ENCODE measurements at regions of chr2 and their contacts with region 1.

Region 1: DNA sequence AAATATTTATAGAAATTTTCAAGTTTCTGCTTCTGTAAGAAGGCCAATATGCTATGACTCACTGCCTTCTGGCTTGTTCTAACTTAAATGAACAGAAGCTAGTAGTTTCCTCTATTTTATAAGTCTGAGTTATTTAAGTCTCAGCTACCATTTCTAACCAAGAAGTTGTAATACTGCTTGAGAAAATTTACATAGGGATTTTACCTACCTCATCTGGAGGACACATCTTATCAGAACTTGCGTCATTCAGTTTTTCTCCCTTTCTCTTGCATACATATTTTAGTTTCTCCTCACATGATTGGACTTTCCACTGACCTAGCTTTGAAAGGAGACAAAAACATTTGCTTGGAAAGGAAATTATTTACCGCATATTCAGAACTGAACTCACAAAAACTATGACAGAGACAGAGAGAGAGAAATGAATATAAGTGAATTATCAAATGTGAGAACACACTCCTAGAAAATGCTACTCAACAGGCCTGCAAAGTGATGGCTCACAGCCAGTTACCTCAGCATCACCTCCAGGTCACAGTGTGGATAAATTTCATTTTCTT is 81.1 kb upstream of the CD302 start:
- DNase-seq: peak; percentile 74
- ATAC-seq: peak; percentile 87
- H3K4me3 Mint-ChIP-seq: no peak overlapping the region
- H3K27ac Mint-ChIP-seq: peak overlapping the region; percentile 76
- H3K4me1 Mint-ChIP-seq: peaks cover 62% of the 10 kb centered on the region
- H3K27me3 Mint-ChIP-seq: no peaks in the 10 kb centered on the region

Region 2: GRCh38 chr2:159516241-159516766 is 362.8 kb before region 1 on chr2:
- CTCF ChIA-PET with region 1: no interaction called
- POLR2A ChIA-PET with region 1: no interaction called
- intact Hi-C with region 1: loop called in 1 of 2 experiments (anchors 5 kb)
- DNase-seq: peak; percentile 10
- ATAC-seq: peak; percentile 91
- H3K4me3 Mint-ChIP-seq: peak overlapping the region; percentile 73
- H3K27ac Mint-ChIP-seq: peak overlapping the region; percentile 83
- H3K4me1 Mint-ChIP-seq: peaks cover 19% of the 10 kb centered on the region
- H3K27me3 Mint-ChIP-seq: no peaks in the 10 kb centered on the region

Region 3: DNA sequence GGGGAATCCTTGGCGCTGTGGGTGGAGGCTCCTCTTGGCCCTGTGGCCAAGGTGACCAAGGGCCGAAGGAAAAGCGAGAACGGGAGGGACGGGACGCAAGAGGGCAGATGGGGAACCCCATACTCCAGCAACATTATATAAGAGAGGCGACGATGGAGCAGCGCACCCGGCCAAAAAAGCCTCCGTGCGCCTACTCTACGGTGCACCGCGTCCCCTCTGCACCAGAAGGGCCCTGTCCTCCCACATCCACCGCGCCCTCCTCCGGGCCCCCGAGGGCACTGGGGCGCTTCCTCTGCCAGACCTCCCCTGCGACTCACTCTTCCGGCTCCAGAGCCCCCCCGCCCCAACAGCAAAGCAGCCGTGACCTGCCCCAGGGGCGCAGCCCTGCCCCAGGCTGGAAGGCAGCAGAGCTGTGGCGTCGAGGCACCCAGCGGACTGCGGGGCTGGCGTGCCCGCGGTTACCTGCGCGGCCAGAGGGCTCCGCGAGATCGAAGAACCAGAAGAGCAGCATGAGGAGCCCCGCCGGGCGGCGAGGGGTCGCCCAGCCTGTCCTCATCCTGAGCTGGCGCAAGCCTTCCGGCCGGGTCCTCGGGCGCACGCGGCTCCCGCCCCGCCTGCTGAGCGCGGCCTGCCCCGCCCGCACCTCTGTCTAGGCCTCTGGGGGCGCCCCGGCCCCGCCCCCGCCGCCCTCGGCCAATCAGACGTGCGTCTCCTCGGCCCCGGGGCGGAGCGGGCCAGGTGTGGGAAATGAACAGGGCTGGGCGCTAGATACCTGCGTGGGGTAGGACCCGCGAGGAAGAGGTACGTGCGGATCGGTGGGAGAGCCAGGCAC is 25.2 kb after region 1 on chr2:
- CTCF ChIA-PET with region 1: interaction called, 5 read pairs
- POLR2A ChIA-PET with region 1: interaction called, 8 read pairs
- intact Hi-C with region 1: loop called (anchors 1 to 2 kb)
- DNase-seq: peak; percentile 91
- ATAC-seq: peak; percentile 76
- H3K4me3 Mint-ChIP-seq: peak within 1 kb of the TSS; percentile 93
- H3K27ac Mint-ChIP-seq: peak within 1 kb of the TSS; percentile 97
- H3K4me1 Mint-ChIP-seq: peaks cover 73% of the 10 kb centered on the region
- H3K27me3 Mint-ChIP-seq: no peaks in the 10 kb centered on the region

Region 4: DNA sequence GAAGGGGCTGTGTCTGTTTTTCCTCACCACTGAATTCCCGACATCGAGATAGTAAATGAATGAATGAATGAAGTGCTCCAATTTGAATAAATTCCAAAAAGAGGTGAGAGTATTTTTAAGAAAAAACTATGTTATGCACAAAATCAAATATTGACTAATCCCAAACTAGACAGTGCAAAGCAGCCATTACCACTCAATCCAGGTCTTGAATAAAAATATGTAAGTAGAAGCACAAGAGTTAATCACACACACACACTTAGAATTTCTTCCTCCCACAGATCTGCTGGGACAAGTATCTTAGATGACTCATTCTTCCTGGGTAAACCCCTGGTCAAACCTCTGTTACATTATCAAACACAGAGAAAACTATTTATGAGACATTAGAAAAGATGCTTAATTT is 81.3 kb after region 1 on chr2:
- CTCF ChIA-PET with region 1: no interaction called
- POLR2A ChIA-PET with region 1: no interaction called
- intact Hi-C with region 1: loop called in 1 of 2 experiments (anchors 1 kb)
- DNase-seq: no peak
- ATAC-seq: peak; percentile 96
- H3K4me3 Mint-ChIP-seq: peak overlapping the region; percentile 9
- H3K27ac Mint-ChIP-seq: peak overlapping the region; percentile 44
- H3K4me1 Mint-ChIP-seq: peaks cover 19% of the 10 kb centered on the region
- H3K27me3 Mint-ChIP-seq: peaks cover 5% of the 10 kb centered on the region

Region 5: GRCh38 chr2:160269803-160270570 is 390.9 kb after region 1 on chr2:
- CTCF ChIA-PET with region 1: no interaction called
- POLR2A ChIA-PET with region 1: interaction called, 5 read pairs
- intact Hi-C with region 1: loop called in 1 of 2 experiments (anchors 2 kb)
- DNase-seq: peak; percentile 80
- ATAC-seq: peak; percentile 59
- H3K4me3 Mint-ChIP-seq: peak overlapping the region; percentile 57
- H3K27ac Mint-ChIP-seq: peak overlapping the region; percentile 52
- H3K4me1 Mint-ChIP-seq: peaks cover 46% of the 10 kb centered on the region
- H3K27me3 Mint-ChIP-seq: no peaks in the 10 kb centered on the region